ENCODE measurements at regions of chr2 and their contacts with region 1.

Region 1: GRCh38 chr2:233251306-233252116 is at the start of gene ATG16L1:
- DNase-seq: peak; percentile 90 to 98 (median 97)

Region 2: DNA sequence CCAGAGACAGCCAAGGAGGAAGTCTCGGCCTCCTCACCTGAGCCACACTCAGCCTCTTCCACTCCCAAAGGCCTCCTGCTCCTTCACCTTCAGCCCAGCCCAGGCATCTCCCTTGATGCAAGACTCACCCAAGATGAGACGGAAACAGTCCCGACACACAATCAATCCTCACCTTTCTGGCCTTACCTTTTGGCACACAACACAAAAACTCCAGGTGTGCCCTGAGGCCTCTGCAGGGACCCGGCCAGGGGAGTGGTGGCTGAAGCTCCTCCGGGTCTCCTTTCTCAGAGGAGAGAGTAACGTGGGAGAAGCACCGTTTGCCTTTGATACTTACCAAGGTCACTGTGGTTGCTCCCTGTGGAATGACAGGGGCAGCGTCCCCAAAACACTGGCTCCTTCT is 641.9 kb before region 1 on chr2:
- intact Hi-C with region 1: loop called (anchors 5 kb)
- DNase-seq: no peak

Region 3: GRCh38 chr2:232854082-232854481 is 397.4 kb before region 1 on chr2:
- intact Hi-C with region 1: loop called (anchors 2 kb)
- DNase-seq: peak in 18 of 42 donors; percentile 13 to 68 (median 29)

Measured in head of caudate nucleus (tissue), 42 donors.